Transverse colon (tissue), 4 donors: ENCODE measurements at regions of chr9 and their contacts with region 1.

Region 1: DNA sequence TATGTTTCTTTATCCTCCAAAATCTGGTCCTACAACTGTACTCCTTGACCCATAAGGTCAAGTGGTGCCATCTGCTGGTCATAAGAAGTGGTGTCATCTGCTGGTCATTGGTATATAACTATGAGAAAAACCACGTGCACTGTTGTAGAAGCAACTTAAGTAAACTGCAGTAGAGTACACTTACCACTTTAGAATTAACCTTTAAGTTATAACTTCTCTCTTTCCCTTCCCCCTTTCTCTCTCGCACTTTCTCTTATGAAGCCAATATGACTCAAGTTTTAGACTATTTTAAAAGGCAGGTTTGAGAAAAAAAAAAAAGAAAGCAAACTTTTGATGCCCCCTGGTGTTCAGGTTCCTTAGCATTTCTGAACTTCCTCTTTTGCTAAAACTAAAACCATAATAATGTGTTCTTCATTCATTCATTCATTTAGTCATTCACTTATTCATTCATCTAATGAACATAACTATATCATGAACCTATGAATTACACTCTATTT is 12.8 kb upstream of the MTAP start:
- DNase-seq: peak; percentile 49
- H3K4me3 ChIP-seq: peak overlapping the region in 1 of 4 donors; percentile 29
- H3K27ac ChIP-seq: no peak overlapping the region
- H3K4me1 ChIP-seq: no peaks in the 10 kb centered on the region
- H3K27me3 ChIP-seq: peaks cover 29% of the 10 kb centered on the region
- CTCF ChIP-seq: peak; percentile 76 to 83 (median 79)
- EP300 ChIP-seq: no peak
- POLR2A ChIP-seq: no peak

Region 2: DNA sequence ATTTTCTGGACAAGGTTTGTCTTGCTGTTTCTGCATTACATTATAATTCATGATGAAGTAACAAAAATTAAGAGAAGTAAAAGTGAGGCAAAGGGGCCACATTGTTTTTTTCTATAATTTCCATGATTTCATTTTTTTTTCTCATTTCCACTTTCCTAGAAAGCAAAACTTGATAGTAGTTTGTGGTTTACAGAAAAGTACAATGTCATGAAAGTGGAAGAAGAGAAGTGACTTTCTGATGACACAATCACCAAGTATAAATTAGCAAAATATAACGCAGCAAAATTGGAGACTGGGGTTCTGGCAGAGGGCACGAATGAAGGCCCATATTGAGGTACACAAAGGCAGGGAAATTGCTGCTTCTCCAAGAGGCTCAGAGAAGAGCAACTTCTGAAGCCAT is 544.8 kb before region 1 on chr9:
- in situ Hi-C with region 1: loop called in 2 of 4 experiments (anchors 25 kb)
- intact Hi-C with region 1: no loop called
- DNase-seq: no peak
- H3K4me3 ChIP-seq: no peak overlapping the region
- H3K27ac ChIP-seq: no peak overlapping the region
- H3K4me1 ChIP-seq: no peaks in the 10 kb centered on the region
- H3K27me3 ChIP-seq: no peaks in the 10 kb centered on the region
- CTCF ChIP-seq: no peak
- EP300 ChIP-seq: no peak
- POLR2A ChIP-seq: no peak

Region 3: GRCh38 chr9:21281275-21281674 is 508.3 kb before region 1 on chr9:
- in situ Hi-C with region 1: no loop called
- intact Hi-C with region 1: no loop called
- DNase-seq: no peak
- H3K4me3 ChIP-seq: no peak overlapping the region
- H3K27ac ChIP-seq: no peak overlapping the region
- H3K4me1 ChIP-seq: no peaks in the 10 kb centered on the region
- H3K27me3 ChIP-seq: no peaks in the 10 kb centered on the region
- CTCF ChIP-seq: no peak
- EP300 ChIP-seq: no peak
- POLR2A ChIP-seq: no peak

Region 4: DNA sequence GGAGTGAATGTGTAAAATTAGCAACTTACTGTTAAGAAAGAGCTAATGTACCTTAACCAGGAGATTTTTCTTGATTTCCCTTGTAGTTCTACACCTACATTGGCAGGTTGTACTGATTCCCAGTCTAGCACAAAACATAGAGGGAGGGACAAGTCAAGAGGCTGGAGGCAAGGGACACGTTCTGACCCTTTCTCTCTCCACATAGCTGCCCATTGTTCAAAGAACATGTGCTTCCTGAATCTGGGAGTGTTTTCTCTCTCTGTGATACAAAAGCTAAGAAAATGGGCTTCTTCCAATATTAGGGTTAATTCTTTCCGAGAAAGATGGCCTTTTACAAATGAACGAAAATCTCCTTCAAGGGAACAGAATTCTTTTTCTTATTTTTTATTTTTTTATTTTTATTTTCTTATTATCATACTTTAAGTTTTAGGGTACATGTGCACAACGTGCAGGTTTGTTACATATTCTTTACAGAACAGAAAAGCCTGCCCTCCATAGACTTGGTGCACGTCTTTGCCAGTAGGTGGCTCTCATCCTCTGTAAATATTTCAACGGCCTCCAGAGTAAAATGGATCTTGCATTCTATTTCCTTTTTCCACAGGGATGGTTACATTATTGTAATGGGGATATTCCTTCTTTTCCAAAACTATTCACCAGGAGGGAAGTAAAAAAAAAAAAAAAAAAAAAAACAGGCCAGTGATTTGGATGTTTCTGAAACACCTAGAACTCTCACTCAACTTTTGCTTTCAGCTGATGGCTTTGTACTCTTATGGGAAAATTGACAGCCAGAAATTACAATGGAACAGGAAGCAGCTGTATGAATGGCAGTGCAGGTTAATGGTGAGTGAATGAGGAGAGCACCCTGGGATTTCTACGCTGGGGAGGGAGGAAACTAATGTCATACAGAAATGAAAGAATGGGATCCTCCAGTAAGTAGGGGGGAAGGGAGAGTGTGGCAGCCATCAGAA is 471.3 kb before region 1 on chr9:
- in situ Hi-C with region 1: loop called (anchors 10 to 25 kb)
- intact Hi-C with region 1: loop called (anchors 5 kb)
- DNase-seq: peak; percentile 18
- H3K4me3 ChIP-seq: no peak overlapping the region
- H3K27ac ChIP-seq: no peak overlapping the region
- H3K4me1 ChIP-seq: peaks cover 0 to 6% (median 0%) of the 10 kb centered on the region in 4 donors
- H3K27me3 ChIP-seq: peaks cover 11% of the 10 kb centered on the region
- CTCF ChIP-seq: peak; percentile 55 to 71 (median 69)
- EP300 ChIP-seq: no peak
- POLR2A ChIP-seq: no peak

Region 5: DNA sequence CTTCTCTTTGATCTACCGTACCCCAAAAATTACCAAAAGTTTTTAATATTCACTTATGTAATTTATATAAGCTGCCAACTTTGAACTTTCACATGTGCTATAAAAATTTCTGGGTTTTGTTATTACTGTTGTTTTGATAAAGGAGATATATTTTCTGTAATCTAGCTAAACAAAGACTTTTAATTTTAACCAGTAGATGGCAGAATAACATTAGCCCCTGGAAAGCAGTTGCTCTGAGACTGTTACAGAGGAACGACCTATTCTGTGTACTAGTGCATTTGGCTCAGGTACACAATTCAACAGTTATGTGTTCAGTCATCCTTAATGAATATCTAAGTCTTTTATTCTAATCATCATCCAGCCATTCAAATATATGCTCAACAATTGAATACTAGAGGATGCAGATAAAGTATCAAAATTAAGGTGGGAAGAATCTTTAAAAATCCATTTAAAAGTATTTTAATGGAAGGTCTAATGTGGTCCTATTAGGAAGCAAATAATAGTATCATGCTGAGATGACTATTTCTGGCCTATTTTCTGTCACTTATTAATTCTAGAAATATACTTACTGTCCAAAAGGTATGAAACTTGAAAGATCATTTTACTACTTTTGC is 463.0 kb before region 1 on chr9:
- in situ Hi-C with region 1: loop called (anchors 10 to 25 kb)
- intact Hi-C with region 1: no loop called
- DNase-seq: no peak
- H3K4me3 ChIP-seq: no peak overlapping the region
- H3K27ac ChIP-seq: no peak overlapping the region
- H3K4me1 ChIP-seq: peaks cover 0 to 47% (median 13%) of the 10 kb centered on the region in 4 donors
- H3K27me3 ChIP-seq: no peaks in the 10 kb centered on the region
- CTCF ChIP-seq: peak; percentile 54 to 65 (median 62)
- EP300 ChIP-seq: no peak
- POLR2A ChIP-seq: no peak

Region 6: DNA sequence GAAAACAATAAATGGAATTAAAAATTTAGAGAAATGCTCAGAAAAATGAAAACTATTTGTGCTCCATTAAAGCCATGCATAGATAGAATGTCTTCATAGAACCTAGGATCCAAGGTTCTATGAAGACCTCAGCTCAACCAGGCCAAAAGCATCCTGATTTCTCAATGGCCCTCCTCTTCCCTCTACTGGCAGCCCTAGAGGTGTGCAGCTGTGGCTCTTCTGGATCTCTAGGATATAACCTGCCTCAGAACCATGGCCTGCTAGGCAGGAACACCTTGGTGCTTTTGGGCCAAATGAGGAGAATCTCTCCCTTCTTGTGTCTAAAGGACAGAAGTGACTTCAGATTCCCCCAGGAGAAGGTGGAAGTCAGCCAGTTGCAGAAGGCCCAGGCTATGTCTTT is 334.3 kb before region 1 on chr9:
- in situ Hi-C with region 1: loop called in 3 of 4 experiments (anchors 10 to 25 kb)
- intact Hi-C with region 1: no loop called
- DNase-seq: peak; percentile 16
- H3K4me3 ChIP-seq: no peak overlapping the region
- H3K27ac ChIP-seq: no peak overlapping the region
- H3K4me1 ChIP-seq: no peaks in the 10 kb centered on the region
- H3K27me3 ChIP-seq: peaks cover under 1% of the 10 kb centered on the region
- CTCF ChIP-seq: peak; percentile 59 to 74 (median 70)
- EP300 ChIP-seq: no peak
- POLR2A ChIP-seq: no peak

Region 7: DNA sequence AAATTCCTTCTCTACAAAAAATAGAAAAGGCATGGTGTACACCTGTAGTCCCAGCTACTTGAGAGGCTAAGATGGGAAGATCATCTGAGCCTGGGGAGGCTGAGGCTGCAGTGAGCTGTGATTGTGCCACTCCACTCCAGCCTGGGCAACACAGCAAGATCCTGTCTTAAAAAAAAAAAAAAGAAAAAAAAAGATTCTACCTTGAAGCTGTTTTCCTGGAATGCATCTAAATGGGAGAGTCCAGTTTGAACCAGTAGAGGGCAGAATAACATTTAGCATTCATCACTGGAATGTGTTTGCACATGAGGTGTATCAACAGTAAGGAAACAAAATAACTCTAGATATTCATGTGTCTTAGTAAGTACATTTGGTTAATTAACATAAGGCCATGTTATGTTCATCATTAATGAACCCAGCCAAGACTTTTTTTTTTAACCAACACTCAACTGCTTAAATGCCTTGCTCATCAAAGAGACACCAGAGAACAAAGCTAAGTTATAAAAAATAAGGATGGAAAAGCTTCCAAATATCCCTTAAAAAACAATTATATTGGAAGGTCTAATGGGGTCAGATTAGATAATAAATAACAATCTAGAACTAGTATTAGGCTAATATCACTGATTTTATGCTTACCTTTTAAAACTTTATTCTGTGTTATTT is 323.6 kb before region 1 on chr9:
- in situ Hi-C with region 1: loop called in 3 of 4 experiments (anchors 10 to 25 kb)
- intact Hi-C with region 1: no loop called
- DNase-seq: no peak
- H3K4me3 ChIP-seq: no peak overlapping the region
- H3K27ac ChIP-seq: no peak overlapping the region
- H3K4me1 ChIP-seq: no peaks in the 10 kb centered on the region
- H3K27me3 ChIP-seq: peaks cover 17% of the 10 kb centered on the region
- CTCF ChIP-seq: peak; percentile 41 to 66 (median 55)
- EP300 ChIP-seq: no peak
- POLR2A ChIP-seq: no peak